ENCODE measurements at regions of chr4 and their contacts with region 1.

Region 1: DNA sequence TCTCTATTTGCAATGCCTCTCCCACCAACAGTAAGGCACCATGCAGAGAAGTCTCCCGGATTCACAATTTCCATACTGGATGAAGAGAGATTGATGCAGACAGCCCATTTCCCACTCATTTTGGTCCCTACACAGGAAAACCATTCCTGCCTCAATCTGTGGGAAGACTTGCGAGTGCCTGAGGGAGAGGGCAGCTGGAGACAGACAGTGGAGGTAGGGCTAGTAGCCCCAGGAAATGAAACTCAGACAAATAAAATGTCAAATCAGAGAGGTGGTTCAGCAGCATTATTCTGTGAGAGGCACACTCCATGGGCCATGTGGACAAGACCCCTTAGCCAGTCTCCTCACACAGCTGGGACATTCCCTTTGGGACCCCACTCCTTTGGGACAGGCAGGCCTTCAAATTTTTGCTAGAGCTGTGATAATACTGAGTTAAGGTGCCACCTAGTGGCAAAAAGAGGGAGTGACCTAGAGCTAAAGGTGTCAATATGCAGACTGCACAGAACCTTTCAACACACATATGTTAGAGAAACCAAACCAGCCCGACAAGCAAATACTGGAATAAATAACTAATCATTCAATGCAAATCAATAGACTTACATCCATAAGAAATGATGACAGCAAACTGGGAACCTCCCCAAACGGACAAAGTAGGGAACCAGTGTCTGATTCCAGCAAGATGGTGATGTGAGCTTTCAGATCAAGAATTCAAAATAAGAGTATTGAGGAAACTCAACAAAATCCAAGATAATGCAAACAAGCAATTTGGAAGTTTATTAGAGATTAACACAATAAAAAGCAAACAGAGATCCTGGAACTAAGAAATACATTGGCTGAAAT is 1865.3 kb upstream of the AGA start:
- DNase-seq: peak; percentile 1
- ATAC-seq: peak; percentile 82
- H3K4me3 ChIP-seq: no peak overlapping the region
- H3K27ac ChIP-seq: no peak overlapping the region
- H3K4me1 ChIP-seq: no peaks in the 10 kb centered on the region
- H3K27me3 ChIP-seq: no peaks in the 10 kb centered on the region
- CTCF ChIP-seq: peak; percentile 58 to 64 (median 62); a peak in 5 of 6 replicates
- EP300 ChIP-seq: no peak
- POLR2A ChIP-seq: no peak
- RAD21 ChIP-seq: peak; percentile 73

Region 2: DNA sequence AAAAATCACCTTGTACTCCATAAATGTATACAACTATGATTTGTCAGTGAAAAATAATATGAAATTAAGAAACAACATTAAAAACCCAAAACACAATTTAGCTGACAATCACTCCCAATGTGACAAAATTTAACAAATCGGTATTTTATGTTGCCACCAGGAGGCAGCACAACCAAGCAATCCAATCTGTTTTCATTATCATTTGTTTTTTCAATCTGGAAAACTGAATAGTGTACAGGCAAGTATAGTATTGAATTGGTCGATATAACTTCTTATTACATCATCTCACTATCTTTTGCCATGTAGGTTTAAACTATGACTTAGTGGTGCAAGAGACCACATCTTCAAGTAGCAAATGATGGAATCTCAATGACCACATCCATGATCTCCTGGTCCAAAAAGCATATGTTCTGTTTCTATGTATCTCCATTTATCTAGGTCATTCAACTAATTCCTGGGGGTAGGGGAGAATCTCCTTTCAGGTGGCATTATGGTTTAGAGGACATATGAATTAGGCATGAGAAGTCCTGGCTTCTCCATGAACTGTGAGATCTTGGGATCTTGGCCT is 1752.4 kb before region 1 on chr4:
- CTCF ChIA-PET with region 1: interaction called, 3 read pairs
- POLR2A ChIA-PET with region 1: no interaction called
- RAD21 ChIA-PET with region 1: no interaction called
- SMC1A ChIA-PET with region 1: no interaction called
- in situ Hi-C with region 1: loop called (anchors 10 kb)
- intact Hi-C with region 1: no loop called
- DNase-seq: no peak
- ATAC-seq: 0 out of 3 replicates have a peak, but pooled peaks have one; percentile 40
- H3K4me3 ChIP-seq: no peak overlapping the region
- H3K27ac ChIP-seq: no peak overlapping the region
- H3K4me1 ChIP-seq: no peaks in the 10 kb centered on the region
- H3K27me3 ChIP-seq: no peaks in the 10 kb centered on the region
- CTCF ChIP-seq: peak; percentile 41 to 68 (median 62); a peak in 5 of 6 replicates
- EP300 ChIP-seq: no peak
- POLR2A ChIP-seq: no peak
- RAD21 ChIP-seq: peak; percentile 83

Region 3: GRCh38 chr4:178577933-178578332 is 729.6 kb before region 1 on chr4:
- CTCF ChIA-PET with region 1: interaction called, 37 read pairs
- POLR2A ChIA-PET with region 1: no interaction called
- RAD21 ChIA-PET with region 1: interaction called, 12 read pairs
- SMC1A ChIA-PET with region 1: interaction called, 18 read pairs
- in situ Hi-C with region 1: no loop called
- intact Hi-C with region 1: loop called (anchors 1 kb)
- DNase-seq: no peak
- ATAC-seq: peak; percentile 66
- H3K4me3 ChIP-seq: no peak overlapping the region
- H3K27ac ChIP-seq: no peak overlapping the region
- H3K4me1 ChIP-seq: no peaks in the 10 kb centered on the region
- H3K27me3 ChIP-seq: no peaks in the 10 kb centered on the region
- CTCF ChIP-seq: peak in 1 of 3 experiments; percentile 14; a peak in 2 of 6 replicates
- EP300 ChIP-seq: no peak
- POLR2A ChIP-seq: no peak
- RAD21 ChIP-seq: 0 out of 2 replicates have a peak, but pooled peaks have one; percentile 16

Region 4: DNA sequence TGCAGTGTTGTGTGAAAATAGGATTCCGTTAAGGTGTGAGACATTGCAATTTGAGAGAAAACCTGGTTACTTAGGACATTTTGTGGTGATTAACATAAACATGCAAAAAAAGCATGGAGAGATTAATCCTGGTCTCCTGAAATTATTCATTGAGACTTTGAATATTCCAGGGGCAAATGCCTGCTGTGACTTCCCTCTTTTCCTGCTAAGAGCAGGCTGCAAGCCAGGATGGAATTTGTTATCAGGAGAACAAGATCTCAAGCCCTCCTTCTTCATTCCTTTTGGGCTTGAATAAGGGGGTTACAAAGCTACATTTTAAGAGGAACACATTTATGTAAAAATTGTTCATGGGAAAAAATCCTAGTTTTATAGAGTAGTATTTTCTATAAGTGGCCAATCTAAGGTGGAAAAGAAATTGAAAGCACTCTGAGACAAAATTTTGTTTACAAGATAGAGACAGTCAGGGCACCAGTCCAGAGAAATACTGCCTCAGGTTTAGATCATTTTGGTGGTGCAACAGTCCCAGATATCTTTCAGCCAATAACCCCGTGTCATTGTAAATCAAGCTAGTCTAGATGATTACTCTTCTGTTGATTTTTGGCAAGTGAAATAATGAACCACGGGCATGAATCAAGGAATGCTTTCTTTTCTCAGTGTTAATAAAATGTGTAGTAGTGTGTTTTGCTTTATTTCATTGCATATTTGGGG is 336.9 kb before region 1 on chr4:
- CTCF ChIA-PET with region 1: interaction called, 26 read pairs
- POLR2A ChIA-PET with region 1: no interaction called
- RAD21 ChIA-PET with region 1: interaction called, 12 read pairs
- SMC1A ChIA-PET with region 1: interaction called, 14 read pairs
- in situ Hi-C with region 1: no loop called
- intact Hi-C with region 1: loop called (anchors 5 kb)
- DNase-seq: no peak
- ATAC-seq: no peak
- H3K4me3 ChIP-seq: no peak overlapping the region
- H3K27ac ChIP-seq: no peak overlapping the region
- H3K4me1 ChIP-seq: no peaks in the 10 kb centered on the region
- H3K27me3 ChIP-seq: no peaks in the 10 kb centered on the region
- CTCF ChIP-seq: no peak
- EP300 ChIP-seq: no peak
- POLR2A ChIP-seq: no peak
- RAD21 ChIP-seq: no peak

Region 5: DNA sequence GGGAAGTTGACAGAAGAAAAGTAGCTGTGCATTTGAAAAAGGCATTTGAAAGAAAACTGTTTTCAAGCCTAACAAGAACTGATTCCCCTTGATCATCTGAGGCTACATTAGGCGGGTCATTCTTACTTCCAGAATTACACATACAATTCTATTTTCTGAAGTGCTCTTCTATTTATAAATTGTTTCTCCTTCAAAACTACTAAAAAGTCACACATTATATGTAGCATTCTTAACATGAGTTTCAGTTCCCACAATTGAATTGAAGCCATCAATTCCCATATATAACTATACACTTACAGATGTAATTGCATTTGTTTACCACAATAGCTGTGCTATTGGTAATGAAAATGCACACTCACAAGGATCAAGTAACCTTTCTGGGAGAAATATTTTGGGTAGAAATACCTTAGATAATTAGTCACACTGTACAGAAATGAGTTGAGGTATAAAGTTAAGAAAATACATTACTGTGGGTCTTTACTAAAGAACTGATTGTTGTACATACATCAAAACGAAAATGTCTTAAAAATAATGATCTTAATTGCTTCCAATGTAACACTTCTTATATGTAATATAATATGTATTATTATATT is 177.3 kb before region 1 on chr4:
- CTCF ChIA-PET with region 1: no interaction called
- POLR2A ChIA-PET with region 1: no interaction called
- RAD21 ChIA-PET with region 1: interaction called, 4 read pairs
- SMC1A ChIA-PET with region 1: interaction called, 4 read pairs
- in situ Hi-C with region 1: no loop called
- intact Hi-C with region 1: loop called (anchors 5 kb)
- DNase-seq: peak; percentile 34
- ATAC-seq: peak; percentile 69
- H3K4me3 ChIP-seq: no peak overlapping the region
- H3K27ac ChIP-seq: no peak overlapping the region
- H3K4me1 ChIP-seq: no peaks in the 10 kb centered on the region
- H3K27me3 ChIP-seq: no peaks in the 10 kb centered on the region
- CTCF ChIP-seq: no peak; a peak in 1 of 6 replicates
- EP300 ChIP-seq: peak; percentile 89 to 90
- POLR2A ChIP-seq: no peak
- RAD21 ChIP-seq: no peak

Region 6: GRCh38 chr4:179372746-179373145 is 65.2 kb after region 1 on chr4:
- CTCF ChIA-PET with region 1: no interaction called
- POLR2A ChIA-PET with region 1: no interaction called
- RAD21 ChIA-PET with region 1: no interaction called
- SMC1A ChIA-PET with region 1: no interaction called
- in situ Hi-C with region 1: no loop called
- intact Hi-C with region 1: no loop called
- DNase-seq: no peak
- ATAC-seq: no peak
- H3K4me3 ChIP-seq: no peak overlapping the region
- H3K27ac ChIP-seq: no peak overlapping the region
- H3K4me1 ChIP-seq: no peaks in the 10 kb centered on the region
- H3K27me3 ChIP-seq: no peaks in the 10 kb centered on the region
- CTCF ChIP-seq: no peak
- EP300 ChIP-seq: no peak
- POLR2A ChIP-seq: no peak
- RAD21 ChIP-seq: no peak

Measured in GM12878 (cell line).